ENCODE measurements at regions of chr13 and their contacts with region 1.

Region 1: GRCh38 chr13:32989942-32990341 is 26.3 kb upstream of the KL start:
- DNase-seq: no peak
- ATAC-seq: no peak
- H3K4me3 ChIP-seq: no peak overlapping the region
- H3K27ac ChIP-seq: no peak overlapping the region
- H3K4me1 ChIP-seq: no peaks in the 10 kb centered on the region
- H3K27me3 ChIP-seq: no peaks in the 10 kb centered on the region
- CTCF ChIP-seq: no peak

Region 2: GRCh38 chr13:32164622-32165268 is 825.2 kb before region 1 on chr13:
- CTCF ChIA-PET with region 1: no interaction called
- POLR2A ChIA-PET with region 1: no interaction called
- in situ Hi-C with region 1: no loop called
- intact Hi-C with region 1: no loop called
- DNase-seq: no peak
- ATAC-seq: peak; percentile 92
- H3K4me3 ChIP-seq: no peak overlapping the region
- H3K27ac ChIP-seq: no peak overlapping the region
- H3K4me1 ChIP-seq: no peaks in the 10 kb centered on the region
- H3K27me3 ChIP-seq: no peaks in the 10 kb centered on the region
- CTCF ChIP-seq: peak; percentile 68

Region 3: GRCh38 chr13:32838945-32839344 is 151.0 kb before region 1 on chr13:
- CTCF ChIA-PET with region 1: no interaction called
- POLR2A ChIA-PET with region 1: no interaction called
- in situ Hi-C with region 1: no loop called
- intact Hi-C with region 1: no loop called
- DNase-seq: no peak
- ATAC-seq: peak; percentile 76
- H3K4me3 ChIP-seq: 0 out of 4 replicates have a peak overlapping the region, but pooled peaks of 1 of the 2 experiments have one; percentile 7
- H3K27ac ChIP-seq: 0 out of 2 replicates have a peak overlapping the region, but pooled peaks have one; percentile 23
- H3K4me1 ChIP-seq: peaks cover 7% of the 10 kb centered on the region; the same call in 1 of the 2 replicates
- H3K27me3 ChIP-seq: no peaks in the 10 kb centered on the region
- CTCF ChIP-seq: no peak

Region 4: GRCh38 chr13:33015241-33015668 is 25.3 kb after region 1 on chr13:
- CTCF ChIA-PET with region 1: no interaction called
- POLR2A ChIA-PET with region 1: no interaction called
- in situ Hi-C with region 1: no loop called
- intact Hi-C with region 1: loop called (anchors 1 kb)
- DNase-seq: no peak
- ATAC-seq: no peak
- H3K4me3 ChIP-seq: no peak overlapping the region
- H3K27ac ChIP-seq: no peak overlapping the region
- H3K4me1 ChIP-seq: no peaks in the 10 kb centered on the region
- H3K27me3 ChIP-seq: no peaks in the 10 kb centered on the region; the same call in 1 of the 2 replicates
- CTCF ChIP-seq: no peak

Region 5: DNA sequence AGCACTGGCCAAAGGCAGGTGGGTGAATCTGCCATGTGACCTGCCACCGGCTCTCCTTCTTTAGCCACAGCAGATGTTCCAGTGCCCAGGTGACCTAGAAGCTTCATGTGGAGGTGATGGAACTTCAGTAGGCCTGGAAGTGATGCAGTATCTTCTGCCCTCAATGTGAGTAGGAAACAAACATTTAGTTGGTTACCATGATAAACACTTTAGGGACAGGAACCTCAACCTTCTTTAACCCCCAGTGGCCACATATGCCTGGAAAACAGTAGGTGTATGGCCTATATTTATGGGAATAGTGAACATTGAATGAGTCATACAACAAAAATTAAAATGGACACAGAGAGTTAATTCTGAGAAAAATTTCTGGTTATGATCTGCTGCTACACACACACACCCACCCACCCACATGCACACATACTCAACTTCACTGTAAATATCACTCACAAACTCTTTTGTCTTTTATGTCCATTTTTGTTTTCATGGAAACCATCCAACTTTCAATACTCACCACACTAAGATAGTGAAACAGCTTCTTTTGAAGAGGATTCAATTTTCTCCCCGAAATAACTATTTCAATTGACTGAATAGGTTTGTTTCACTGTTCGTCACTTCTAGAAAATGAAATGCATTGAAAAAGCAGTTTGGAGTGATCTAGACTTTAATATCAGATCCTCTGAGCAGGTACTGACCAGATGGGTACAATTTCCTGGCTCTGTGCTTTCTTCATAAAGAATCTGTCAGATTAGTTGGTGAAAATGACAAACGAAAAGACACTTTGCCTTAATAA is 198.3 kb after region 1 on chr13:
- CTCF ChIA-PET with region 1: no interaction called
- POLR2A ChIA-PET with region 1: no interaction called
- in situ Hi-C with region 1: no loop called
- intact Hi-C with region 1: no loop called
- DNase-seq: no peak
- ATAC-seq: no peak
- H3K4me3 ChIP-seq: no peak overlapping the region
- H3K27ac ChIP-seq: no peak overlapping the region
- H3K4me1 ChIP-seq: peaks cover 5% of the 10 kb centered on the region; the same call in 1 of the 2 replicates
- H3K27me3 ChIP-seq: no peaks in the 10 kb centered on the region
- CTCF ChIP-seq: no peak